CD8-positive, alpha-beta memory T cell (primary cell): ENCODE measurements at regions of chr1 and their contacts with region 1.

Region 1: DNA sequence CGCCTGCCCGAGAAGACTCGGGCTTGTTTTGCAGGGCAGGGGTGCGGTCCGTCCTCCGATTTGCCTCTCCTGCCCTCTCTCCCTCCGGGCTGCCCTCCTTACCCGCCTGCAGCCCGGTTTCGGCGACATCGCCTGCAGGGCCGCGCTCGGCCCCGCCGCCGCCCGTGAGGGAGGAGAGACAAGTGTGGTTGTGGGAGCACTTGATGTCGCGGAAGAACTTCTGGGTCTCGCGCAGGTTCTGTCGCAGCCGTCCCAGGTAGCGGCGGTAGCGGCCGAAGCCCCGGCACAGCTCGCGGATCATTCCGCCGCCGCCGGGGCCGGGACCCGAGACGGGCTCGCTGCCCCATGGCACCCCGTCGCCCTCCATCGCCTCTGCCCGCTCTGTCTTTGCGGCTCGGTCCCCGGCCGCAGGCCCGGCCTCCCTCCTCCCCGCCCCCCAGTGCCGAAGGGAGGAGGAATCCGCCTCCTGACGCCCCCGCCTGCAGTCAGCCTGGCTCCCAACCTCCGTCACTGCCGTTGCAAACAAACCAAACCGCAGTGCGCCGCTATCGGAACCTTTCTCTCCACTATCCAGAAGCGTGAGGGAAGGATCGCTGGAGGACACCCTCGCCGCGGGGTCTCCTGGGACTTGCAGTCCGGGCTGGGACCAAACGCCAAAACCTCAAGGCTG is at the start of gene DSTYK:
- DNase-seq: peak; percentile 80 to 94 (median 89)
- H3K4me3 ChIP-seq: peak within 1 kb of the TSS; percentile 68
- H3K4me3 Mint-ChIP-seq: peak within 1 kb of the TSS; percentile 89 to 100 (median 93)
- H3K27ac ChIP-seq: peak within 1 kb of the TSS; percentile 84
- H3K27ac Mint-ChIP-seq: peak within 1 kb of the TSS; percentile 87 to 100 (median 94)
- H3K4me1 ChIP-seq: peaks cover 19% of the 10 kb centered on the region
- H3K4me1 Mint-ChIP-seq: peaks cover 29 to 59% (median 43%) of the 10 kb centered on the region in 3 donors
- H3K27me3 ChIP-seq: no peaks in the 10 kb centered on the region
- H3K27me3 Mint-ChIP-seq: no peaks in the 10 kb centered on the region
- total RNA-seq, gene DSTYK: 12.9 to 13.4 TPM

Region 2: DNA sequence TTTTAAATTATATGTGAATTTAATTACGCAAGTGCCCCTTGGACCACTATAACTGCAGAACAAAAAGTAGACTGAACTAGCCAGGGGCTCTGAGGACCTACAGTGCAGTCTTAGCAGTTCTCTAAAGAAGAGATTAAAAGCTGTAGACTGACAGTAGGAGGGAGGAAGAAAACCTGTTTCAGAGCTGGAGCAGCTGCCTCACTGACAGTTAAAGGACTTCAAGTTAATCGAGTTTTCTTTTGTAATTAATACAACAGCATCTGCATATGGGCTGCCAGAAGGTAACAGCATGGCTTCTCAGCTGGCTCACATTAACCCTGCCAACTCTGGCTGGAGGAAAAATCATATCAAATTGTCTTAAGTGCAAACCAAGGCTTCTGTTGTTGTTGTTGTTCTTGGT is 19.7 kb before region 1 on chr1:
- CTCF ChIA-PET with region 1: no interaction called
- POLR2A ChIA-PET with region 1: no interaction called
- DNase-seq: no peak
- H3K4me3 ChIP-seq: no peak overlapping the region
- H3K4me3 Mint-ChIP-seq: no peak overlapping the region
- H3K27ac ChIP-seq: no peak overlapping the region
- H3K27ac Mint-ChIP-seq: no peak overlapping the region
- H3K4me1 ChIP-seq: peaks cover 6% of the 10 kb centered on the region
- H3K4me1 Mint-ChIP-seq: peaks cover 58 to 78% (median 70%) of the 10 kb centered on the region in 3 donors
- H3K27me3 ChIP-seq: no peaks in the 10 kb centered on the region
- H3K27me3 Mint-ChIP-seq: no peaks in the 10 kb centered on the region

Region 3: DNA sequence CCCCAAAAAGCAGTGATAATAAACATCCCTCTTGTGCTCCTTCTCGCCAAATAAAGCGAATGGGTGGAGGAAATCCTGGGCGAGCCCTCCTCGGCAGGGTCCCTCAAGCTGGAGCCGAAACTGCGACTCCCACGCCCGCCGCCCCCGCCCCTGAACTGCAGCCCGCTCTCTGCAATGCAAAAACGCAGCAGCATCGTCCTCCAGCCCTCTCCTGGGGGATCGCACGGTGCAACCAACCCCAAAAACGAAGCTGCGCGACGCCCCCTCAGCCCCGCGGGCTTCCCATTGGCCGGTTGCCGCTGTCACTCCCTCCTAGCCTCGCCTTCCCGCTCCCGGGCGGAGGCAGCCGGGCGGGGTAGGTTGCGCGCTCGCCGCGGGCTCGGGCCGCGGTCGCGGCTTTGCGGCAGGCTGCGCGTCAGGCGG is 16.3 kb after region 1 on chr1 and contains the start of gene TMCC2:
- CTCF ChIA-PET with region 1: interaction called, 6 read pairs
- POLR2A ChIA-PET with region 1: interaction called, 24 read pairs
- DNase-seq: peak; percentile 69 to 88 (median 80)
- H3K4me3 ChIP-seq: peak within 1 kb of the TSS; percentile 74
- H3K4me3 Mint-ChIP-seq: peak within 1 kb of the TSS; percentile 89 to 97 (median 95)
- H3K27ac ChIP-seq: no peak within 1 kb of the TSS
- H3K27ac Mint-ChIP-seq: peak within 1 kb of the TSS; percentile 69 to 97 (median 84)
- H3K4me1 ChIP-seq: peaks cover 17% of the 10 kb centered on the region
- H3K4me1 Mint-ChIP-seq: peaks cover 21 to 29% (median 27%) of the 10 kb centered on the region in 3 donors
- H3K27me3 ChIP-seq: no peaks in the 10 kb centered on the region
- H3K27me3 Mint-ChIP-seq: peaks cover 9% of the 10 kb centered on the region in 2 donors
- total RNA-seq, gene TMCC2: 7.1 to 8.4 TPM